ENCODE measurements at regions of chr17 and their contacts with region 1.

Region 1: DNA sequence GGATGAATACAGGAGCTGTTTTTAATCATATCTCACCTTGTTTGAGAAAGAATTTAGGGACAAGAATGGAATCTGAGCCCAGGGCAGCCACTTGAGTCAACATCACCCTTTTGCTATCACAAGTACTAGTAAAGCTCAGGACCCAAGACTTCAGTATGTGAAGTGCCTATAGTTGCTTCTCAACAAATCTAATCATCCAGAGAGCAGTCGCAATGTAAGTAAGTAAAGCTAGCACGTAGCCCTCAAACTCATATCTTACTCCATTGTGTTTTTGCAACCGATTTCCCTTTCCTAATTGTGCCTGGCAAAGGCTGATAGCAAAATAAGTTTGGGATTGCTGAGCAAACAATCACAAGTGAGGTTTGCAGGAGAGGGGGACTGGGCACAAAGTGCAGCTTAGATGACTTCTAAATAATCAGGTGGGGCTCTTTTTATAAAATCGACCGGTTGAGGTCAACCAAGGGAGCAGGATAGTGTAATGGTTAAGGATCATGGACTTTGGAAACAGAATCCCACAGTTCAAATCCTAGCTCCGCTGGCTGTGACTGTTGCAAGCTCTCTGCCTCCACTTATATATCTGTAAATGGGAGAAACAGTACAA is 13.0 kb downstream of the TOB1 start:
- DNase-seq: no peak
- ATAC-seq: no peak
- H3K4me3 ChIP-seq: no peak overlapping the region
- H3K4me3 Mint-ChIP-seq: peak overlapping the region in 8 of 10 donors; percentile 75 to 89 (median 85)
- H3K27ac ChIP-seq: no peak overlapping the region
- H3K27ac Mint-ChIP-seq: peak overlapping the region in 7 of 9 donors; percentile 41 to 93 (median 88)
- H3K4me1 ChIP-seq: peaks cover 5 to 7% of the 10 kb centered on the region in 2 donors
- H3K4me1 Mint-ChIP-seq: peaks cover 18 to 40% (median 28%) of the 10 kb centered on the region in 7 donors
- H3K27me3 ChIP-seq: no peaks in the 10 kb centered on the region
- H3K27me3 Mint-ChIP-seq: peaks cover 0 to 32% (median 0%) of the 10 kb centered on the region in 5 donors

Region 2: GRCh38 chr17:50421308-50422051 is 431.6 kb before region 1 on chr17:
- CTCF ChIA-PET with region 1: no interaction called
- POLR2A ChIA-PET with region 1: no interaction called
- intact Hi-C with region 1: no loop called
- DNase-seq: peak in 5 of 9 donors; percentile 16 to 35 (median 26)
- ATAC-seq: no peak
- H3K4me3 ChIP-seq: peak overlapping the region; percentile 50
- H3K4me3 Mint-ChIP-seq: peak overlapping the region; percentile 62 to 94 (median 83)
- H3K27ac ChIP-seq: peak overlapping the region; percentile 72
- H3K27ac Mint-ChIP-seq: peak overlapping the region; percentile 76 to 97 (median 91)
- H3K4me1 ChIP-seq: peaks cover 18 to 20% of the 10 kb centered on the region in 2 donors
- H3K4me1 Mint-ChIP-seq: peaks cover 10 to 50% (median 29%) of the 10 kb centered on the region in 7 donors
- H3K27me3 ChIP-seq: no peaks in the 10 kb centered on the region
- H3K27me3 Mint-ChIP-seq: peaks cover 0 to 16% (median 0%) of the 10 kb centered on the region in 5 donors

Region 3: DNA sequence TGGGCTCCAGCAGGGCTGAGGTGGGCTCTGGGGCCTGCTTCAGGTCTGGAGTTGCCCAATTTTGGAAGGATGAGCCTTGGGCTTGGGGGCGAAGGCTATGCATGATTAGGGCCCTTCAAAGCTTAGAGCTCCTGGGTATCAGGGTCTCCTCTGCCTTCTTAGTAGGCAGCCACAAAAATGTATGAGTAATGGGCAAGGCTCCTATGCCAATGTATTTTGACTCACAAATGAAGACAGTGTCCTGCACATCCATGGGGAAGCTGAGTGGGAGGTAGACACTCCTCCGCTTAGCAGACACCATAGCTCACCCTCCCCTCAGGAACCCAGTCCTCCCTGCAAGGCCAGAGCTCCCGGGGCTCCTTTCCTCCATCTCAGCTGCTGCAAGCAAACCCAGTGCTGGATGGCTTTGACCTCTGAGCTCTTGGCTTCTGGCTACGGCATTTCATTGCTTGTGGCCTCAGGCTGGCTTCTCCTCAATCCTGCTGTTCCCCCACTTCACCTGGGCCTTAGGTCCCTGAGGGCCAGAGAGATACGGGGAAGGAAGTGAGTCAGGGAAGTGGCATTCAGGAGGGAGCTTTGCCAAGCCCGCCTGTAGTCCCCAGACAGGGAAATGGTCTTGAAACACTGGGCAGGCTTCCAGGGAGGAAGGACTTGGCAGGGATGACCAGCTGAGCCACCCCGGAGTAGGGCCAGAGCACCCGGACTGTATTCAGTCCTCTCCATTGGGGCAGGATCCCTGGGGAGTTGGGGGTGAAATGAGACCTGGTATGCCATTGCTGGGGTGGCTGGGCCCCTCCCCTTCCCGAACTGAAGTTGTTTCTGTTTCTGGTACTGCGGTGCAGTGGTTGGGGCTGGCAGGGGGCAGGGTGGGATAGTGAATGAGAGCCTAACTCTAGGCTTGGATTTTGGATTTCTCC is 214.0 kb before region 1 on chr17:
- CTCF ChIA-PET with region 1: no interaction called
- POLR2A ChIA-PET with region 1: no interaction called
- intact Hi-C with region 1: no loop called
- DNase-seq: no peak
- ATAC-seq: no peak
- H3K4me3 ChIP-seq: no peak overlapping the region
- H3K4me3 Mint-ChIP-seq: no peak overlapping the region
- H3K27ac ChIP-seq: no peak overlapping the region
- H3K27ac Mint-ChIP-seq: no peak overlapping the region
- H3K4me1 ChIP-seq: no peaks in the 10 kb centered on the region
- H3K4me1 Mint-ChIP-seq: peaks cover 0 to 6% (median 0%) of the 10 kb centered on the region in 7 donors
- H3K27me3 ChIP-seq: no peaks in the 10 kb centered on the region
- H3K27me3 Mint-ChIP-seq: peaks cover 30 to 43% (median 37%) of the 10 kb centered on the region in 5 donors

Region 4: GRCh38 chr17:50737118-50737698 is 115.9 kb before region 1 on chr17:
- CTCF ChIA-PET with region 1: no interaction called
- POLR2A ChIA-PET with region 1: no interaction called
- intact Hi-C with region 1: no loop called
- DNase-seq: no peak
- ATAC-seq: no peak
- H3K4me3 ChIP-seq: no peak overlapping the region
- H3K4me3 Mint-ChIP-seq: no peak overlapping the region
- H3K27ac ChIP-seq: no peak overlapping the region
- H3K27ac Mint-ChIP-seq: peak overlapping the region in 6 of 9 donors; percentile 2 to 82 (median 54)
- H3K4me1 ChIP-seq: peaks cover 5 to 8% of the 10 kb centered on the region in 2 donors
- H3K4me1 Mint-ChIP-seq: peaks cover 28 to 63% (median 47%) of the 10 kb centered on the region in 7 donors
- H3K27me3 ChIP-seq: no peaks in the 10 kb centered on the region
- H3K27me3 Mint-ChIP-seq: no peaks in the 10 kb centered on the region

Region 5: GRCh38 chr17:50816771-50817751 is 36.1 kb before region 1 on chr17:
- CTCF ChIA-PET with region 1: interaction called, 12 read pairs
- POLR2A ChIA-PET with region 1: interaction called, 3 read pairs
- intact Hi-C with region 1: loop called in 1 of 2 experiments (anchors 1 kb)
- DNase-seq: peak in 8 of 9 donors; percentile 32 to 67 (median 50)
- ATAC-seq: peak; percentile 88
- H3K4me3 ChIP-seq: no peak overlapping the region
- H3K4me3 Mint-ChIP-seq: peak overlapping the region in 3 of 10 donors; percentile 26 to 38 (median 32)
- H3K27ac ChIP-seq: no peak overlapping the region
- H3K27ac Mint-ChIP-seq: no peak overlapping the region
- H3K4me1 ChIP-seq: no peaks in the 10 kb centered on the region
- H3K4me1 Mint-ChIP-seq: peaks cover 0 to 9% (median 3%) of the 10 kb centered on the region in 7 donors
- H3K27me3 ChIP-seq: no peaks in the 10 kb centered on the region
- H3K27me3 Mint-ChIP-seq: peaks cover 6 to 33% (median 13%) of the 10 kb centered on the region in 5 donors

Region 6: DNA sequence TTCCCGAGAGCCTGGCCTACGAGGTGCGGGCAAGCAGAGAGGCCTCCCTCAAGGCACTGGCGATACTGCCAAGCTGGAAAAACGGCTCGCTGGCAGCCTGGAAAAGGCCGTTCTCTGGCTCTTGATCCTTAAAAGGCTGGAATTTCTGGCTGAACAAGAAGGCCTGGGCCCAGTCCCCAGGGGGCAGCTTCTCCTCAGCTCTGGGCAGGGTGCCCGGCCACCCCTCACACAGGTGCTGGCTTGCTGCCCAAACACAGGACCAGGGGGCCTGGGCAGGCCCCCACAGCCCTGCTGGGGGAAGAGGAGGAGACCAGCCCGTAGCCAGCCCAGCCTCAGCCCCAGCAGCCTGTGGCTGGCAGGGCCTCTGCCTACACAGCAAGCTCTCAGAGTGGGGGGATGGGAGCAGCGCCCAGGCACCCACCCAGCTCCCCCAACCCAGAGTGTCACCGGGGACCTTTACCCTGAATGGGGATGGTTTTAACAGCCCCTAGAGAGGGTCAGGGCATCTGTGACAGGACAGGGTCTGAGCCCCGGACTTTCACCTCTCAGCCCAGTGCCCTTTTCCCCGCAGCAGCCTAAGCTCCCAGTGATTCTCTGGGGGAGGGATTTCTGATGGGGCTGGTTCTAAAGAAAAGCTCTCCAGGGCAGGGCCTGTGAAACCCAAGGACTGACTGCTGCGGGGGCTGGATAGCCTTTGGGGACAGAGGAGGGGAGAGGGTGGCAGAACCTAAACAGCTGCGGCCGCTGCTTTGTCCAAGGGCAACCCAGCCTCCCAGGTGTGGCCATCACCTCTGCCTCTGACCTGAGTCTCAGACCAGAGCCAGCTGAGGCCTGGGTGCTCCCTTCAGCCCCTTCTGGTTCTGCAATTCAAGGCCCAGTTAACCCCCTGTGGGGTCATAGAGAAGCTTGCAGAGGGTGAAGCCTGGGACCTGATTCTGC is 51.7 kb after region 1 on chr17:
- CTCF ChIA-PET with region 1: interaction called, 9 read pairs
- POLR2A ChIA-PET with region 1: interaction called, 828 read pairs
- intact Hi-C with region 1: loop called in 1 of 2 experiments (anchors 1 kb)
- DNase-seq: no peak
- ATAC-seq: no peak
- H3K4me3 ChIP-seq: no peak overlapping the region
- H3K4me3 Mint-ChIP-seq: no peak overlapping the region
- H3K27ac ChIP-seq: no peak overlapping the region
- H3K27ac Mint-ChIP-seq: no peak overlapping the region
- H3K4me1 ChIP-seq: peaks cover 31 to 47% of the 10 kb centered on the region in 2 donors
- H3K4me1 Mint-ChIP-seq: peaks cover 40 to 68% (median 64%) of the 10 kb centered on the region in 7 donors
- H3K27me3 ChIP-seq: no peaks in the 10 kb centered on the region
- H3K27me3 Mint-ChIP-seq: peaks cover 0 to 2% (median 0%) of the 10 kb centered on the region in 5 donors

Region 7: GRCh38 chr17:50944054-50944901 is 91.2 kb after region 1 on chr17:
- CTCF ChIA-PET with region 1: interaction called, 393 read pairs
- POLR2A ChIA-PET with region 1: interaction called, 664 read pairs
- intact Hi-C with region 1: loop called in 1 of 2 experiments (anchors 1 kb)
- DNase-seq: peak; percentile 56 to 79 (median 73)
- ATAC-seq: peak; percentile 91
- H3K4me3 ChIP-seq: peak overlapping the region; percentile 73
- H3K4me3 Mint-ChIP-seq: peak overlapping the region; percentile 73 to 90 (median 85)
- H3K27ac ChIP-seq: peak overlapping the region; percentile 88
- H3K27ac Mint-ChIP-seq: peak overlapping the region; percentile 78 to 95 (median 94)
- H3K4me1 ChIP-seq: peaks cover 17 to 33% of the 10 kb centered on the region in 2 donors
- H3K4me1 Mint-ChIP-seq: peaks cover 25 to 61% (median 35%) of the 10 kb centered on the region in 7 donors
- H3K27me3 ChIP-seq: no peaks in the 10 kb centered on the region
- H3K27me3 Mint-ChIP-seq: no peaks in the 10 kb centered on the region

Region 8: GRCh38 chr17:50956750-50957523 is 103.8 kb after region 1 on chr17:
- CTCF ChIA-PET with region 1: interaction called, 393 read pairs
- POLR2A ChIA-PET with region 1: interaction called, 664 read pairs
- intact Hi-C with region 1: loop called (anchors 1 kb)
- DNase-seq: peak; percentile 39 to 72 (median 58)
- ATAC-seq: peak; percentile 92
- H3K4me3 ChIP-seq: no peak overlapping the region
- H3K4me3 Mint-ChIP-seq: peak overlapping the region in 1 of 10 donors; percentile 68
- H3K27ac ChIP-seq: no peak overlapping the region
- H3K27ac Mint-ChIP-seq: peak overlapping the region in 4 of 9 donors; percentile 17 to 62 (median 50)
- H3K4me1 ChIP-seq: peaks cover 0 to 7% of the 10 kb centered on the region in 2 donors
- H3K4me1 Mint-ChIP-seq: peaks cover 0 to 8% (median 4%) of the 10 kb centered on the region in 7 donors
- H3K27me3 ChIP-seq: no peaks in the 10 kb centered on the region
- H3K27me3 Mint-ChIP-seq: no peaks in the 10 kb centered on the region

Region 9: GRCh38 chr17:51397361-51398127 is 544.4 kb after region 1 on chr17:
- CTCF ChIA-PET with region 1: no interaction called
- POLR2A ChIA-PET with region 1: no interaction called
- intact Hi-C with region 1: no loop called
- DNase-seq: no peak
- ATAC-seq: no peak
- H3K4me3 ChIP-seq: no peak overlapping the region
- H3K4me3 Mint-ChIP-seq: no peak overlapping the region
- H3K27ac ChIP-seq: no peak overlapping the region
- H3K27ac Mint-ChIP-seq: peak overlapping the region in 2 of 9 donors; percentile 14 to 66
- H3K4me1 ChIP-seq: no peaks in the 10 kb centered on the region
- H3K4me1 Mint-ChIP-seq: peaks cover 0 to 4% (median 0%) of the 10 kb centered on the region in 7 donors
- H3K27me3 ChIP-seq: no peaks in the 10 kb centered on the region
- H3K27me3 Mint-ChIP-seq: peaks cover 0 to 6% (median 0%) of the 10 kb centered on the region in 5 donors